Sigmoid colon (tissue), 7 donors: ENCODE measurements at regions of chr6 and their contacts with region 1.

Region 1: GRCh38 chr6:34392497-34393190 is at the start of gene NUDT3:
- DNase-seq: peak; percentile 97
- H3K4me3 ChIP-seq: peak within 1 kb of the TSS; percentile 82 to 98 (median 86)
- H3K27ac ChIP-seq: peak within 1 kb of the TSS; percentile 95 to 96 (median 96)
- H3K4me1 ChIP-seq: peaks cover 0 to 47% (median 40%) of the 10 kb centered on the region in 4 donors
- H3K27me3 ChIP-seq: no peaks in the 10 kb centered on the region
- CTCF ChIP-seq: peak; percentile 75 to 88 (median 84)
- EP300 ChIP-seq: no peak
- POLR2A ChIP-seq: no peak
- total RNA-seq, gene NUDT3: 31.4 to 45.7 (median 37.5) TPM

Region 2: DNA sequence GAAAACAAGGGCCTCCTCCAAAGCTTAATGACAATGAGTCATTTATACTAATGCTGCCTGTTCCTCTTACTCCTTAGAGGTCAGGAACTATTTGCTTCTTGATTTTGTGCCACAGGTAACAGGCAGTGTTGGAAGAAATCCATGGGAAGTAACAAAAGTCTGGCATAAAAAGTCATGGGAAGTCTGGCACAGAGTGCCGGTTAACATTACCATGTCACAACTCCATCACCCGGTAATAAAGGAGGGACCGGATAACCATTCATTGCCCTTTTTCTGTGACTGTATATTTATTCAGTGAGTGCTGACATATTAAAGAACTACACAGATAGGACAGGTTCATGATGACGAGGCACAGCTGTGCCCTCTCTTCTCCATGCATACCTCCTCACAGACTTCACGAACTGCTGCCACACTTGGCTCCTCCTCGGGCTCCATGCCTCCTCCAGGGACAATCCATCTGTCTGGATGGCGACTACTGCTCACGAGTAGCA is 51.1 kb before region 1 on chr6:
- intact Hi-C with region 1: loop called (anchors 2 kb)
- DNase-seq: peak; percentile 79
- H3K4me3 ChIP-seq: peak overlapping the region in 1 of 4 donors; percentile 8
- H3K27ac ChIP-seq: peak overlapping the region; percentile 8 to 69 (median 60)
- H3K4me1 ChIP-seq: peaks cover 0 to 59% (median 56%) of the 10 kb centered on the region in 4 donors
- H3K27me3 ChIP-seq: no peaks in the 10 kb centered on the region
- CTCF ChIP-seq: no peak
- EP300 ChIP-seq: peak in 1 of 4 donors; percentile 68
- POLR2A ChIP-seq: no peak

Region 3: DNA sequence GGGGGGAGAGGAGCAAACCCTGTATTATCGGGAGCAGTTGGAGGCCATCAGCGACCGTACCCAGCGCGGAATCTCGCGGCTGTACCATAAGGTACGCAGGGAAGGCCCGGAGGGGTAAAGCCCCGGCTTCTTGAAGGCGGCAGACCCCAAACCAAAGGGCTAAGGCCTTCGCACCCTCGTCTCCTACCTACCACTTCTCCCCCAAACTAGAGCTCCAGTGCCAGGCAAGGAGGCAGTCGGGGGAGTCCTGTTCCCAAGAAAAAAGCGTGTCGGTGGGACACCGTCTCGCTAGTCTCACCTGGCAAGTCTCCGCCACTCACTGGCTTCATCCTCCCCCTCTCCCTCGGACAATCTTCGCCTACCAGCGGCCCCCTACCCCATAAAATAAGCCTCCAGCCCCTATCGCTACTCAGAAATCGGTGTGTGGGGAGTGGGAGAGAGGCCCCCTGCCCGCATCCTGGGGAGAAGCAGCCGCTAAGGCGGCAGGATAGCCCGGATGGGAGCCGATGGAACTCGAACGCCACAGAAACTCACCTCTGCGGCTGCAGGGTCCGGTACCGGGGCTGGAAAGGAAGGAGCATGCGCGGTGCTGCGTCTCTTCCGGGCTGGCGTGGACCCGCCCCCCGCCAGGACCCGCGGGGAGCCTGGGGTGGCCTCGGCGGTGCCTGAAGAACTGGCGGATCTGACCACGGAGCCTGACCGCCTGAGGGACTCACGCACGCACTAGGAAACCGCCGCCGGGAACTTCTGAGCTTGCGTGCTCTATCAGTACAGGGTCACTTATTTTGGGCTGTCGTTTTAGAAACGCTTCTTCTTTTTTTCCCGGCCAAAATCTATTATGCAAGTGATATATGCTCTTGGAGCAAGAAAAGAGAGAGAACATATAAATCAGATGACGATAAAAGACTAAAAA is 33.1 kb after region 1 on chr6 and contains the start of gene RPS10:
- intact Hi-C with region 1: loop called (anchors 5 kb)
- DNase-seq: peak; percentile 97
- H3K4me3 ChIP-seq: peak within 1 kb of the TSS; percentile 56 to 81 (median 74)
- H3K27ac ChIP-seq: peak within 1 kb of the TSS; percentile 78 to 91 (median 86)
- H3K4me1 ChIP-seq: peaks cover 0 to 16% (median 11%) of the 10 kb centered on the region in 4 donors
- H3K27me3 ChIP-seq: no peaks in the 10 kb centered on the region
- CTCF ChIP-seq: no peak
- EP300 ChIP-seq: peak in 1 of 4 donors; percentile 3
- POLR2A ChIP-seq: peak; percentile 73 to 89
- total RNA-seq, gene RPS10: 2,556 to 7,534 (median 4,475) TPM

Region 4: DNA sequence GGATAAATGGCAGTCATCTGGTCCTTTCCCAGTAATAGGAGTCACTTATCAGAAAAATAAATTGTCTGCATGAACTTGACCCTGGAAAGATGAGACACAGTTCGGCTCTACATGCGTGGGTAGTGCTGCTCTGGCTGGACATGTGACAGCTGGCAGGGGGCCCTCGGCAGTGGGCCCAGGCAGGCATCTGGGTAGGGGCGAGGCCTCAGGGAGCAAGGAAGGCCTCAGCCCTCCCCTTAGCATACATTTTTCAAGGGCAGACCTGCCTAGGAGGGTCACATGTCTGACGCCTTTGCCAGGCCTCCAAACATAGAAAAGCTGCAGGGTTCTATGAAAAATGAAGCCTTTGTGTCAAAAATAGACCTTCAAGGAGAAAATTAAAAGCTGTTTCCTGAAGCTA is 316.7 kb after region 1 on chr6:
- intact Hi-C with region 1: no loop called
- DNase-seq: peak; percentile 82
- H3K4me3 ChIP-seq: no peak overlapping the region
- H3K27ac ChIP-seq: peak overlapping the region; percentile 40 to 67 (median 63)
- H3K4me1 ChIP-seq: peaks cover 0 to 13% (median 11%) of the 10 kb centered on the region in 4 donors
- H3K27me3 ChIP-seq: no peaks in the 10 kb centered on the region
- CTCF ChIP-seq: no peak
- EP300 ChIP-seq: no peak
- POLR2A ChIP-seq: no peak